WTC11 (cell line): ENCODE measurements at regions of chr1 and their contacts with region 1.

Region 1: GRCh38 chr1:176897350-176898236 is 266.9 kb downstream of the ASTN1 start:
- DNase-seq: peak; percentile 92
- ATAC-seq: peak; percentile 97
- H3K4me3 Mint-ChIP-seq: peak overlapping the region; percentile 79
- H3K27ac Mint-ChIP-seq: no peak overlapping the region; the same call in 1 of the 2 replicates
- H3K4me1 Mint-ChIP-seq: peaks cover 14% of the 10 kb centered on the region
- H3K27me3 Mint-ChIP-seq: no peaks in the 10 kb centered on the region
- CTCF ChIP-seq: peak; percentile 96

Region 2: DNA sequence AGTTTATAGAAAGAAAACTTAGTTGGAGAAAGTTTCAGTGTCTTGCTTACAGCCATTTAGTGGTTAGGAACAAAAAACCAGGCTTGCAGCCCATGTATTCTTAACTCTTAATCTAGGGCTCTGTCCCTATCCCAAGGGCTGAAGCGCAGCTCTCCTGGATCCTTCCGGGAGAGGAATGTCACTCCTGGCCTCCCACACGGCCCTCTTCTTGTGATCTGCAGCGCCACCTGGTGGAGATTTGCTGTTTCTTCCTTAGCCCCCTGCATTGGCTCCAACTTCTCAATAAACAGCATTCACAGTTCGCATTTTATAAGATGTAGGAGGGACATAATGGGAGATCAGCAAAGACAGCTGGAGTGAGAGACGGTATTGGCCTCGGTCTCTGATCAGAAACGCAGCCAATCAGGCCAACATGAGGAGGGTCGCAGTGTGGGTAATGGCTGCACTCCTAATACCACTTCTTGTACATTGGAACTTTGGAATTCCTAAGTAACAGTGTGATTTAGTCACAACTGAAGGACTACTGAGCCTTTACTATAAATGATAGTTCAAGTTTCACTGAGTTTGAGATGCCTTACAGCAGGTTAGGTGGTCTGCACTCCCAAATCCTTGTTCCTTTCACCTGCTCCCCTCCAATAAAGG is 16.5 kb before region 1 on chr1:
- CTCF ChIA-PET with region 1: interaction called, 10 read pairs
- POLR2A ChIA-PET with region 1: no interaction called
- DNase-seq: peak; percentile 84
- ATAC-seq: peak; percentile 86
- H3K4me3 Mint-ChIP-seq: no peak overlapping the region
- H3K27ac Mint-ChIP-seq: no peak overlapping the region
- H3K4me1 Mint-ChIP-seq: no peaks in the 10 kb centered on the region; the same call in 1 of the 2 replicates
- H3K27me3 Mint-ChIP-seq: no peaks in the 10 kb centered on the region; the same call in 1 of the 2 replicates
- CTCF ChIP-seq: peak; percentile 86

Region 3: GRCh38 chr1:176949033-176949662 is 51.6 kb after region 1 on chr1:
- CTCF ChIA-PET with region 1: interaction called, 74 read pairs
- POLR2A ChIA-PET with region 1: no interaction called
- DNase-seq: peak; percentile 92
- ATAC-seq: peak; percentile 89
- H3K4me3 Mint-ChIP-seq: no peak overlapping the region
- H3K27ac Mint-ChIP-seq: no peak overlapping the region
- H3K4me1 Mint-ChIP-seq: peaks cover 49% of the 10 kb centered on the region
- H3K27me3 Mint-ChIP-seq: no peaks in the 10 kb centered on the region; the same call in 1 of the 2 replicates
- CTCF ChIP-seq: peak; percentile 92

Region 4: GRCh38 chr1:177164380-177165068 is 266.9 kb after region 1 on chr1 and contains the start of gene ASTN1:
- CTCF ChIA-PET with region 1: interaction called, 17 read pairs
- POLR2A ChIA-PET with region 1: no interaction called
- DNase-seq: peak; percentile 69
- ATAC-seq: peak; percentile 89
- H3K4me3 Mint-ChIP-seq: peak within 1 kb of the TSS; percentile 90
- H3K27ac Mint-ChIP-seq: no peak within 1 kb of the TSS
- H3K4me1 Mint-ChIP-seq: peaks cover 9% of the 10 kb centered on the region
- H3K27me3 Mint-ChIP-seq: peaks cover 26% of the 10 kb centered on the region; the same call in 1 of the 2 replicates
- CTCF ChIP-seq: no peak
- total RNA-seq, gene ASTN1: 3.4 to 5.0 TPM (median 4.7 TPM) in 3 replicates

Region 5: DNA sequence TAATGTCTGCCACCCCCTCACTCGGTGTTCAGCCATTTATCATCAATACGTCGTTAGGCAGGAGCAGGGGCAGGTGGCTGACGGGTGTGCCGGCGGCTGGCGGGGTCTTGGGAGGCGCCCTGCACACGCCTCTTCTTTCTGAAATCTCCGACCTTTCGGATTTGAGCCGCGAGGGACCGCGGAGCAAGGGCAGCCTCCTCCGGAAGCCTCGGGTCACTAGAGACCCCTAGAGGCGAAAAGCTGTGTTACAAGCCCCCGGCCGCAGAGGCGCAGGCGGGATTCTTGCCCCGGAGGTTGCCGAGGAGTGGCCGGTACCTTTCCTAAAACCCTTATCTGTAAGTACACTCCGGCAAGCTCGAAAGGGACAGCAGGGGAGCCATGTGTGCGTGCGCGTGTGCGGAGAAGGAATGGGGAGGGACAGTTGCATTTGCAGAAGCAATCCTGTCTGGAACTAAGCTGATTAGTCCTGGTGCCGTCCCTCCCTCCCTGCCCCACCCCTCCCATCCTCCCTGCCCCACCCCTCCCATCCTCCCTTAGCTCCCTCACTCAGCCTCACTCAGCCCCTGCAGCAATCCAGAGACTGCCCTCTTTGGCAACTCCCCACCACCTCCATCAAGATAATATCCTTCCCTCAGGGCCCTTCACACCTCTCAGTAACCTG is 284.2 kb after region 1 on chr1:
- CTCF ChIA-PET with region 1: interaction called, 57 read pairs
- POLR2A ChIA-PET with region 1: no interaction called
- DNase-seq: peak; percentile 92
- ATAC-seq: peak; percentile 92
- H3K4me3 Mint-ChIP-seq: peak overlapping the region; percentile 74
- H3K27ac Mint-ChIP-seq: no peak overlapping the region
- H3K4me1 Mint-ChIP-seq: peaks cover 12% of the 10 kb centered on the region
- H3K27me3 Mint-ChIP-seq: peaks cover 48% of the 10 kb centered on the region
- CTCF ChIP-seq: peak; percentile 89

Region 6: GRCh38 chr1:177355595-177355994 is 458.0 kb after region 1 on chr1:
- CTCF ChIA-PET with region 1: interaction called, 13 read pairs
- POLR2A ChIA-PET with region 1: no interaction called
- DNase-seq: peak; percentile 33
- ATAC-seq: peak; percentile 78
- H3K4me3 Mint-ChIP-seq: no peak overlapping the region
- H3K27ac Mint-ChIP-seq: no peak overlapping the region
- H3K4me1 Mint-ChIP-seq: peaks cover 2% of the 10 kb centered on the region
- H3K27me3 Mint-ChIP-seq: no peaks in the 10 kb centered on the region
- CTCF ChIP-seq: peak; percentile 39; the same call in 1 of the 2 replicates